Head of caudate nucleus (tissue), 42 donors: ENCODE measurements at regions of chr9 and their contacts with region 1.

Region 1: DNA sequence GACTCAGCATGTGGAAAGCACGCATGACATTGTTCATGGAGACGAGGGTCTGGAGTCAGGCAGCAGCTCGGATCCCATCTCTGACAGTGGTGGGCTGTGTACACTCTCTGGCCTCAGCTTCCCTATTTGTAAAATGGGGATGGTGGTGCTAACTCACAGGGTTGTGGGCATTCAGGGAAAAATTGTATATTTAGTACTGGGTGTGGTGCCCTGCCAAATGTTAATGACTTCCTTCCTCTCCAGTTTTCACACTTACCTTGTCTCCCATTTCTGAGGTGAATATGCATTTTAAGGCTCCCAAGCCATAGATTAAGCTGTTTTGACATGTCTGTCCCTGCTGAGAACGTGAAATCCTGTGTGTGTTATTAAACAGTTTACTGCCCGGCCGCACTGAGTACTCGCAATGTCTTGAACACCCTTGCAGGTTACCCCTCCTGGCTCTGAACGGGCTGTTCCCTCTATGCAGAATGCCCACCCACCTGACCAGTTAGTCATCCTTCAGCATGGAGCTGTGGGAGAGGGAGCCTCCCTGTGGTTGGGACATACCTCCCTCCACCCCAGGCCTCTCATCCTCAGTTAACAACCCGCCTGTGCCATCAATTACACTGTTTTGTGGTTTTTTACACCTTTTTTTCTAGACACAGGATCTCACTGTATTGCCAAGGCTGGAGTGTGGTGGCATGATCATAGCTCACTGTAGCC is 25.8 kb downstream of the TJP2 start:
- DNase-seq: peak in 1 of 42 donors; percentile 39

Region 2: GRCh38 chr9:69121828-69122548 is 77.9 kb before region 1 on chr9:
- intact Hi-C with region 1: loop called (anchors 10 kb)
- DNase-seq: peak; percentile 67 to 92 (median 84)

Region 3: DNA sequence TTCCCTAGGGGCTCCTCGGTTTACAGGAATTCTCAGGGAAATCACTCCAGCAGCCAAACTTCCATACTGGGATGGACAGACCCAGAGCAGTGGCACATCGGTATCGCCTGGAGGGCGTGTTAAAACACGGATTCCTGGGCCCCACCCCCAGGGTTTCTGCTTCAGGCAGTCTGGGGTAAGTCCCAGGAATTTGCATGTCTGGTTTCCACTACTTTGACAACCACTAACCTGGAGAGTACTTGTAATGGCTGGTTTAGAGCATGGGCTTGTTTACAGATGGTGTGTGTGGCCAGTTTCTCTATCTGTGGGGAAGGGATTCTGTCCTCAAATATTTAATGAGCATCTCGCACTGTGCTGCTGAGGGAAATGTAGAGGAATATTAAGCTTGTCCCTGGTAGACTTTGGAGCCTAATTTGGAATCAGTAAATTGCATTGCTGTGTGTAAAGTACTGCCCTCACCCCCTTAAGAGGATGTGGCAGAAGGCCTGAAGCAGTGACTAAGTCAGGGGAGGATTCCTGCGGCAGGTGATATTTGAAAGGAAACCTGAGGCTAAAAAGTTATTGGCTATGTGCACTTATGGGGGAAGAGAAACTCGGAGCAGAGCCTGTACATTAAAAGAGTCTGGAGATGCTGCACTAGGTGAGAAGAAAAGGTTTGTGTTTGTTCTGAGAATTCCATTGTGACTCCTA is 44.4 kb before region 1 on chr9:
- intact Hi-C with region 1: no loop called
- DNase-seq: no peak